ENCODE measurements at regions of chr4 and their contacts with region 1.

Region 1: DNA sequence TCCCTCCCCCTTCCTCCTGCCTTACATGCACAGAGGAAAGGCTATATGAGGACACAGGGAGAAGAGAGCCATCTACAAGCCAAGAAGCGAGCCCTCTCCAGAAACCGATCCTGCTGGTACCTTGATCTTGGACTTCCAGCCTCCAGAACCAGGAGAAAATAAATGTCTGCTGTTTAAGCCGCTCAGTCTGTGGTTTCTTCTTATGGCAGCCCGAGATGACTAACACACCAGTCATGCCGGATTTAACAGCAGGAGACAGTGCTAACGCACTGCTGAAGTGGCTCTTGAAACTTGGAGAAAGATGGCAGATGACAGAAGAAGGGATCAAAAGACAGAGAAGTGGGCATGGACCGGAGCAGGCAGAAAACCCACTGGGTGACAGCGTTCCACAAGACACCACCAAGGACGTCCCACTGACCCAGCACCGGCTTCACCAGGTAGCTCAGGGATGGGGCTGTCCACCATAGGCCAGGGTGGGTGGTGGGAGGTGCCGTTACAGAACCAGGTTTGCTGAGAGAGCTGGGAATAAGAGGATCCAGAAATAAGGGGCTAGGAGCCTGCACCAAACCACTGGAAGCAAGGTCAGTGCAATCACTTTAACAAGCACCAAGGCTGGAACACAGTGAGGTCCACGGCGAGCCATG is 6.2 kb upstream of the MAN2B2 start:
- DNase-seq: no peak
- H3K4me3 ChIP-seq: no peak overlapping the region
- H3K27ac ChIP-seq: no peak overlapping the region
- H3K4me1 ChIP-seq: peaks cover 3 to 6% of the 10 kb centered on the region in 2 donors
- H3K27me3 ChIP-seq: peaks cover 7 to 15% of the 10 kb centered on the region in 2 donors
- CTCF ChIP-seq: no peak
- POLR2A ChIP-seq: no peak

Region 2: DNA sequence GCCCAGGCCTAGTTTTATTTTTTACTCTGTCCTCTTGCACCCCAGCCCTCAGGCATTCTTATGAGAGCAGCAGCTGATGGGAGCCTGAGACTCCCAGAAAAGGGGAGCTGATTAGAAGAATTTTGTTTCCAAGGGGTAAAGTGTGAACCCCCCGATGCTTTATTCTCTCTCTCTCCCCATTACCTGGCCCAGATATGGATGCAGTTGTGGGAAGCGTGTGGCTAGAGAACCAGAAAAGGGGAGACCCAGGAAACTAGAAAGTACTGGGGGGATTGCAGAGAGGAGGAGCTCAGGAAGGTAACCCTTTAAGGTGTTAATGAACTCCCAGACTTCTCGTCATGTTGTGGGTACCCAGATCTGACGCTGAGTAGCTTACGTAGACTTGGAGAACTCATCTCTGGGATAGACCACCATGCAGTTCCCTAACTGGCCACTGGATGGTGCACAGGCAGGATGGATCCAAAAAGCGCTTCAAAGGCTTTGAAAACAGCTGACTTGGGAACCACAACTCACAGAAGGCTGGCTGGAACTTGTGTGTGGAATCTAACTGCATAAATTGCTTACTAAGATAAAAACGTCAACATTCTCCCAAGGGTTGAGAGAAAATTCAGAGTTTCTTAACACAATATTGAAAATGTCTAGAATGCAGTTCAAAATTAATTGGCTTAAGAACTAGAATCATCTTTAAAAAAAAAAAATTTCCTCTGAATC is 405.5 kb after region 1 on chr4:
- intact Hi-C with region 1: loop called (anchors 5 kb)
- DNase-seq: peak; percentile 77 to 82
- H3K4me3 ChIP-seq: no peak overlapping the region
- H3K27ac ChIP-seq: no peak overlapping the region
- H3K4me1 ChIP-seq: no peaks in the 10 kb centered on the region
- H3K27me3 ChIP-seq: no peaks in the 10 kb centered on the region
- CTCF ChIP-seq: peak; percentile 96 to 99 (median 98)
- POLR2A ChIP-seq: no peak